ENCODE measurements at regions of chr6 and their contacts with region 1.

Region 1: GRCh38 chr6:18186033-18186432 is 30.8 kb downstream of the KDM1B start:
- DNase-seq: peak in 1 of 3 donors; percentile 4
- H3K4me3 ChIP-seq: peak overlapping the region in 1 of 3 experiments; percentile 11
- H3K4me3 Mint-ChIP-seq: peak overlapping the region in 1 of 2 donors; percentile 60
- H3K27ac ChIP-seq: peak overlapping the region; percentile 77 to 93
- H3K27ac Mint-ChIP-seq: peak overlapping the region; percentile 84 to 96 (median 95)
- H3K4me1 ChIP-seq: peaks cover 27 to 36% of the 10 kb centered on the region in 2 donors
- H3K4me1 Mint-ChIP-seq: peaks cover 37% of the 10 kb centered on the region
- H3K27me3 ChIP-seq: no peaks in the 10 kb centered on the region
- H3K27me3 Mint-ChIP-seq: no peaks in the 10 kb centered on the region
- CTCF ChIP-seq: no peak

Region 2: GRCh38 chr6:18101271-18101670 is 84.8 kb before region 1 on chr6:
- intact Hi-C with region 1: no loop called
- DNase-seq: no peak
- H3K4me3 ChIP-seq: no peak overlapping the region
- H3K4me3 Mint-ChIP-seq: no peak overlapping the region
- H3K27ac ChIP-seq: no peak overlapping the region
- H3K27ac Mint-ChIP-seq: no peak overlapping the region
- H3K4me1 ChIP-seq: no peaks in the 10 kb centered on the region
- H3K4me1 Mint-ChIP-seq: no peaks in the 10 kb centered on the region
- H3K27me3 ChIP-seq: no peaks in the 10 kb centered on the region
- H3K27me3 Mint-ChIP-seq: peaks cover 0 to 3% (median 3%) of the 10 kb centered on the region in 3 donors
- CTCF ChIP-seq: no peak

Region 3: GRCh38 chr6:18155150-18155863 is 30.7 kb before region 1 on chr6 and contains the start of gene KDM1B:
- intact Hi-C with region 1: loop called in 1 of 2 experiments (anchors 5 kb)
- DNase-seq: peak; percentile 97 to 99 (median 99)
- H3K4me3 ChIP-seq: peak within 1 kb of the TSS; percentile 90 to 99 (median 99)
- H3K4me3 Mint-ChIP-seq: peak within 1 kb of the TSS; percentile 96 to 100
- H3K27ac ChIP-seq: peak within 1 kb of the TSS; percentile 99
- H3K27ac Mint-ChIP-seq: peak within 1 kb of the TSS; percentile 98 to 100 (median 99)
- H3K4me1 ChIP-seq: peaks cover 31 to 58% of the 10 kb centered on the region in 2 donors
- H3K4me1 Mint-ChIP-seq: peaks cover 48% of the 10 kb centered on the region
- H3K27me3 ChIP-seq: no peaks in the 10 kb centered on the region
- H3K27me3 Mint-ChIP-seq: peaks cover 0 to 1% (median 0%) of the 10 kb centered on the region in 3 donors
- CTCF ChIP-seq: no peak
- polyA plus RNA-seq, gene KDM1B: 4.4 to 50.8 (median 24.1) TPM

Region 4: DNA sequence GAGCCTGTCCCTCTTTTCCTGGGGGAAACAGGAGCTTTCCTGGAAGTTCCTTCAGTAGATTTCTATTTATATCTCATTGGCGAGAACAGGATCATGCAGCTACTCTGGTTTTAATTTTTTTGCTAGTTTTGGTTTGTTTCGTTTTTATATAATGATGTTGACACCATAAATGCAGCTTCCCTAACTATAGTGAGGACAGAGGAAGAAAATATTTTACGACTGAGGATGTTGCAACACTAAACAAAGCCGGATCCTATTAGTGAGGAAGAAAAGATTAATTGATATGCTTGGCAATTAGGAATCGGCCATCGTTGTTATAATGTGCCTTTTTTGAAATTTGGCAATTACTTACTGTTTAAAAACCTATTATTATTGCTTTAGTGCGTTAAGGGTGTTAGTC is 14.2 kb before region 1 on chr6:
- intact Hi-C with region 1: loop called in 1 of 2 experiments (anchors 1 kb)
- DNase-seq: peak; percentile 57 to 78 (median 58)
- H3K4me3 ChIP-seq: peak overlapping the region; percentile 1 to 65 (median 46)
- H3K4me3 Mint-ChIP-seq: peak overlapping the region; percentile 44 to 72
- H3K27ac ChIP-seq: peak overlapping the region; percentile 49 to 90
- H3K27ac Mint-ChIP-seq: peak overlapping the region; percentile 88 to 97 (median 95)
- H3K4me1 ChIP-seq: peaks cover 39 to 60% of the 10 kb centered on the region in 2 donors
- H3K4me1 Mint-ChIP-seq: peaks cover 45% of the 10 kb centered on the region
- H3K27me3 ChIP-seq: no peaks in the 10 kb centered on the region
- H3K27me3 Mint-ChIP-seq: no peaks in the 10 kb centered on the region
- CTCF ChIP-seq: no peak

Region 5: DNA sequence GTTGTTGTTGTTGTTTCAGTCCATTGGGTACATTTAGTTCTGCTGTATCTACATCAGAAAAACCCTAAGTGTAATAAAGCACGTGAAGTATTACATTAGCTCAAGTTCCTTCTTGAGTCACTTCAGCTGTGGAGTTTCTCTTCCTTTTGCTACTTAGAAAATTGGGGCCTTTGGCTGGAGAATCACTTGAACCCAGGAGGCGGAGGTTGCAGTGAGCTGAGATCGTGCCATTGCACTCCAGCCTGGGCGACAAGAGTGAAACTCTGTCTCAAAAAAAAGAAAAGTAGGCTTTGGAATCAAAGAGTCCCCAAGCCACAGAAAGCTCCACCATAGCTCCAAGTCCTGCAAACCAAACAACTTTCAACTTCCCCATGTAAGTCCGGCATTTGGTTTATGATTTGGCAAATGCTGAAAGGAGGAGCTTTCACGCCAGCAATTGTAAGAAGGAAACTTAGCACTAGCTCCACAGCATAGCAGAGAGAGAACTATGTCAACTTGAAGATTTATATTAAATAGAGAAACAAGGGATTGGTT is 144.6 kb after region 1 on chr6:
- intact Hi-C with region 1: loop called in 1 of 2 experiments (anchors 10 kb)
- DNase-seq: peak; percentile 79 to 90 (median 87)
- H3K4me3 ChIP-seq: peak overlapping the region in 1 of 3 experiments; percentile 31
- H3K4me3 Mint-ChIP-seq: peak overlapping the region; percentile 41 to 74
- H3K27ac ChIP-seq: peak overlapping the region; percentile 96 to 97
- H3K27ac Mint-ChIP-seq: peak overlapping the region; percentile 97 to 99 (median 99)
- H3K4me1 ChIP-seq: peaks cover 57 to 64% of the 10 kb centered on the region in 2 donors
- H3K4me1 Mint-ChIP-seq: peaks cover 50% of the 10 kb centered on the region
- H3K27me3 ChIP-seq: no peaks in the 10 kb centered on the region
- H3K27me3 Mint-ChIP-seq: no peaks in the 10 kb centered on the region
- CTCF ChIP-seq: no peak

Measured in CD14-positive monocyte (primary cell).